ENCODE measurements at regions of chr14 and their contacts with region 1.

Region 1: DNA sequence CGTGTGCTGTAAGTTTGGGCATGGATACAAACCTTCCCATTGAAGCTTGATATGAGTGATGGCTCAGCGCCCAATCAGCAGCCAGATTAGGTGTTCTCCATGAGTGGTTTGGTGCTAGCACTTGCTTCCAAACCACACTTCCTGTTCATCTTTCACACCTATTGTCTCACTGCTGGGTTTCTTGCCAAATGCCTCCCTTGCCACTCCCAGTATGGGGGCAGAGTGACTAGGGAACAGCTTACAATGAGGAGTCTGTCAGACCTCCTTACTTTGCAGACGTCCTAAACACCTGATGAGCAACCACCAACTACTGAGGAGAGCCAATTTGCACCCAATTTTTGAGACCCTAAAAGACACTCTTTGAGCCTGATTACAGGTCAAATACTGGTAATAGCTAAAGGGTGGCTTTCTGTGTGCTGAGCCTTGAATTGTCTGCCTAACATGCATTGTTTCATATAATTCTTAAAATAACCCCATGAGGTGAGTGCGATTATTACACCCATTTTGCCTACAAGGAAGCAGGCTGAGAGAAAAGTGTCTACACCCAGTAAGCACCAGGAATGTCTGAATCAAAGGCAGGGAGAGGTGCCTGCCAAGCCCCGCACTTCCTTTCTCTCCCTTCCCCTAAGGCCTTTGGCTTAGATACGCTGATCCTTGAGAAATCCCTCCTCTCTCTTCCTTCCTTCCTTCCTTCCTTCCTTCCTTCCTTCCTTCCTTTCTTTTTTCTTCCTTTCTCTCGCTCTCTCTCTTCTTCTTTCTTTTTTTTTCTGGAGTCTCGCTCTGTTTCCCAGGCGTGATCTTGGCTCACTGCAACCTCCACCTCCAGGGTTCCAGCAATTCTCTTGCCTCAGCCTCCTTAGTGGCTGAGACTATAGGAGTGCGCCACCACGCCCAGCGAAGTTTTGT is 48.2 kb upstream of the FOS start:
- DNase-seq: no peak
- ATAC-seq: peak; percentile 73
- H3K4me3 Mint-ChIP-seq: peak overlapping the region; percentile 36
- H3K27ac Mint-ChIP-seq: peak overlapping the region; percentile 44
- H3K4me1 Mint-ChIP-seq: peaks cover 38% of the 10 kb centered on the region
- H3K27me3 Mint-ChIP-seq: no peaks in the 10 kb centered on the region
- CTCF ChIP-seq: no peak

Region 2: GRCh38 chr14:75147423-75148071 is 82.8 kb before region 1 on chr14:
- CTCF ChIA-PET with region 1: no interaction called
- POLR2A ChIA-PET with region 1: no interaction called
- intact Hi-C with region 1: no loop called
- DNase-seq: no peak
- ATAC-seq: no peak
- H3K4me3 Mint-ChIP-seq: no peak overlapping the region
- H3K27ac Mint-ChIP-seq: no peak overlapping the region
- H3K4me1 Mint-ChIP-seq: peaks cover 19% of the 10 kb centered on the region
- H3K27me3 Mint-ChIP-seq: no peaks in the 10 kb centered on the region
- CTCF ChIP-seq: no peak

Region 3: DNA sequence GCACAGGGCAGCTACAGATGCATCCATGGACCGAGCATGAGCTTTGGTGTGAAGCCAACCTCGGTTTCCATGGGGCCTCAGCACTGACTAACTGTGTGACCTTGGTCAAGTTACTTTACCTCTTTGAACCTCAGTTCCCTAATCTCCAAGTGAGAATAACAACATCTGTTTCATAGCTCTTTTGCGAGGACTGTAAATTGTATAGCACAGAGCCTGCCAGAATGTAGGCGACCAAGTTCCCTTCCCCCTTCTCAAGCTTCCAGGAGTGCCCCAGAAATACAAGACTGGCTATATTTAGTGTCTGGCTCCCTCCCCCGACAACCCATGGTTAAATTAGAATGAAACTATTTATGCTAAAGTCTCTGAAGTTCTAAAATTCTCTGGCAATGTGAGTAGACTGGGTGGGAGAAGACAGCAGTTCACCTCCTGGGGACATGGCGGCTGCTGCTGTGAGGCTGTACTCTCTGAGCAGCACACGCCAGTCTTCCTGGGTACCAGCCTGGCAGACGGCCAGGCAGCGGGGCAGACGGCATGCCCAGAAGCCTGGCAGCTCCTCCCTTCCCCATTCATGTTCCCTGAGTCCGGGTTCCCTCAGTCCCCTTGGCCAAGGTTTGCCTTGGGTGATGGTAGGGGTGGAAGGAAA is 32.0 kb before region 1 on chr14:
- CTCF ChIA-PET with region 1: no interaction called
- POLR2A ChIA-PET with region 1: no interaction called
- intact Hi-C with region 1: loop called (anchors 5 kb)
- DNase-seq: no peak
- ATAC-seq: no peak
- H3K4me3 Mint-ChIP-seq: no peak overlapping the region
- H3K27ac Mint-ChIP-seq: no peak overlapping the region
- H3K4me1 Mint-ChIP-seq: peaks cover 11% of the 10 kb centered on the region
- H3K27me3 Mint-ChIP-seq: no peaks in the 10 kb centered on the region
- CTCF ChIP-seq: no peak

Region 4: DNA sequence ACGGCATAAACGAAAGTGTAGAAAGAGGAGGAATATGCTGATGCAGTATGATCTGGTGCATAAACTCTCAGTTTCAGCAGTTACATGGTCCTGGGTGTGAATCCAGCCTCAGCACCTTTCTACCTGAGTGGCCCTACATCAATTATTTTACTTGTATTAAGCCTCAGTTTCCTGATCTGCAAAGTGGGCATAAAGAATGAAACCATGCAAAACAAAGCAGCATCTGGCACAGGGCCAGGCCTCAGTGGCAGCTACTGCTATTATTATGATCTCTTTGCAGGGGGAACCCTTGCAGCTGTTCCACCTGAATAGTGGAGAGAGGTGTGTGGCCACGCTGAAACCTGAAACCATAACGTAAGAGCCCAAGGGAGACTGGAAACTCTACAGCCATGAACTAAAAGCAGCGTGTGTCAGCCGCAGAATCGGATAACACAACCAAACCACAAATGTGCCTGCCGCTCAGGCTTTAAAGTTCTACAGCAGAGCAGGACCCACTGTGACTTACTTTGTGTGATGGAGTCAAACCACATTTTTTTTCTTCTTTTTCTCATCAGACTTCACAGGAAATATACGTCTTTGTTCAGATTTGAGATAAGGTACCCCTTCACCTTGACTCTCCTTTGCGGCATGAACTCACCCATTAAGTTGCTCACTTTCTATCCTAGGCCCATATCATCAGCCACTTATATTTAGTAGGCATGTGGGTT is 19.0 kb after region 1 on chr14:
- CTCF ChIA-PET with region 1: no interaction called
- POLR2A ChIA-PET with region 1: no interaction called
- intact Hi-C with region 1: loop called (anchors 2 kb)
- DNase-seq: peak; percentile 24
- ATAC-seq: peak; percentile 85
- H3K4me3 Mint-ChIP-seq: no peak overlapping the region
- H3K27ac Mint-ChIP-seq: peak overlapping the region; percentile 54
- H3K4me1 Mint-ChIP-seq: peaks cover 26% of the 10 kb centered on the region
- H3K27me3 Mint-ChIP-seq: no peaks in the 10 kb centered on the region
- CTCF ChIP-seq: no peak

Region 5: GRCh38 chr14:75418849-75419768 is 188.7 kb after region 1 on chr14:
- CTCF ChIA-PET with region 1: no interaction called
- POLR2A ChIA-PET with region 1: no interaction called
- intact Hi-C with region 1: no loop called
- DNase-seq: peak; percentile 28
- ATAC-seq: peak; percentile 94
- H3K4me3 Mint-ChIP-seq: peak overlapping the region; percentile 28
- H3K27ac Mint-ChIP-seq: peak overlapping the region; percentile 46
- H3K4me1 Mint-ChIP-seq: peaks cover 19% of the 10 kb centered on the region
- H3K27me3 Mint-ChIP-seq: no peaks in the 10 kb centered on the region
- CTCF ChIP-seq: no peak

Measured in activated B cell treated with CpG ODN at 0.5 μM for 24 hours (primary cell).